ENCODE measurements at regions of chr1 and their contacts with region 1.

Region 1: DNA sequence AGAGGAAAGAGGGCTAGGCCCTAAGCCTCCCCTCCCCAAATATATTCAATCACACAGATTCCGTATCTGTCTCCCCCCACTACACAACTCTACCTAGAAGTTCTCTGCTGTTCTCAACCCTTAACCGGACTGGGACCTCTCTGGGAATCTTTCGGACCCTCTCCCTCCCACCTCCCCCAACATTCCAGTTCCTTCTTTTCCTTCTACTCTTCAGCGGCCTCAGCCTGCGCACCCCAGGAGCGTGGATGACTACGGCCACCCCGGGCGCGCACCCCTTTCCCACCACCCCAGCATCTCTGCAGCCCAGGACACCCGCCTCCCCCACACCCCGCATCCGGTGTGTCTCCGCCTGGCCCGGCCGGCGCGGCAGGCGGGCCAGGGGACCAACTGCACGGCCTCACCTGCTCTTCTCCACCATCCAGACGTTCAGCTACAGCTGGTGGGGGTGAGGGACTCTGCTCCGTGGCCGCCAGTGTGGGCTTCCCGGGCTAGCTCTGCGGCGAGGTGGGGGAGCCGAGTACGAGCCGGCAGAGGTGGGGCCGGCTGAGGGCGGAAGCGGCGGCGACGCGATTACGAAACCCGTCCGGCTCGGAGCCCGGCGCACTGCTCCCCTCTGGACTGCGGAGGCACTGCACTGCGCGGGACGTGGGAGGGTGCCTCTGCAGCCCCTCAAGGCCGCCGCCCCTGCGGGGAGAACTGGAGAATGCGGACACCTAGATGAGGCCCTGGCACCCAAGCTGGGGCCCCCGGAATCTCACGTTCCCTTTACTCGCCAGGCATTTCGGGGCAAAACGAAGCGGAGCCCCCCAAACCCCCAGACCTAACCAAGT is at the start of gene CDC42SE1:
- DNase-seq: peak; percentile 86
- H3K4me3 Mint-ChIP-seq: peak within 1 kb of the TSS; percentile 86
- H3K27ac Mint-ChIP-seq: peak within 1 kb of the TSS; percentile 98
- H3K4me1 Mint-ChIP-seq: peaks cover 53% of the 10 kb centered on the region
- H3K27me3 Mint-ChIP-seq: no peaks in the 10 kb centered on the region
- total RNA-seq, gene CDC42SE1: 98.1 to 99.0 TPM

Region 2: GRCh38 chr1:149962123-149962548 is 1097.2 kb before region 1 on chr1:
- CTCF ChIA-PET with region 1: no interaction called
- intact Hi-C with region 1: no loop called
- DNase-seq: peak; percentile 63
- H3K4me3 Mint-ChIP-seq: no peak overlapping the region
- H3K27ac Mint-ChIP-seq: no peak overlapping the region
- H3K4me1 Mint-ChIP-seq: peaks cover 12% of the 10 kb centered on the region
- H3K27me3 Mint-ChIP-seq: no peaks in the 10 kb centered on the region

Region 3: GRCh38 chr1:150955280-150955679 is 104.0 kb before region 1 on chr1:
- CTCF ChIA-PET with region 1: no interaction called
- intact Hi-C with region 1: no loop called
- DNase-seq: no peak
- H3K4me3 Mint-ChIP-seq: no peak overlapping the region
- H3K27ac Mint-ChIP-seq: no peak overlapping the region
- H3K4me1 Mint-ChIP-seq: peaks cover 3% of the 10 kb centered on the region
- H3K27me3 Mint-ChIP-seq: no peaks in the 10 kb centered on the region

Region 4: GRCh38 chr1:151047925-151048645 is 11.2 kb before region 1 on chr1:
- CTCF ChIA-PET with region 1: interaction called, 14 read pairs
- intact Hi-C with region 1: no loop called
- DNase-seq: peak; percentile 66
- H3K4me3 Mint-ChIP-seq: peak overlapping the region; percentile 87
- H3K27ac Mint-ChIP-seq: peak overlapping the region; percentile 78
- H3K4me1 Mint-ChIP-seq: peaks cover 38% of the 10 kb centered on the region
- H3K27me3 Mint-ChIP-seq: no peaks in the 10 kb centered on the region

Region 5: GRCh38 chr1:151070474-151071276 is 11.4 kb after region 1 on chr1 and contains the start of gene GABPB2:
- CTCF ChIA-PET with region 1: interaction called, 5 read pairs
- intact Hi-C with region 1: loop called (anchors 1 kb)
- DNase-seq: peak; percentile 92
- H3K4me3 Mint-ChIP-seq: peak within 1 kb of the TSS; percentile 99
- H3K27ac Mint-ChIP-seq: peak within 1 kb of the TSS; percentile 100
- H3K4me1 Mint-ChIP-seq: peaks cover 26% of the 10 kb centered on the region
- H3K27me3 Mint-ChIP-seq: no peaks in the 10 kb centered on the region
- total RNA-seq, gene GABPB2: 16.1 to 16.2 TPM

Measured in activated naive CD4-positive, alpha-beta T cell treated with anti-CD3 and anti-CD28 coated beads for 36 hours (primary cell).